PC-3 (cell line): ENCODE measurements at regions of chr19 and their contacts with region 1.

Region 1: GRCh38 chr19:43743022-43743421 is 11.7 kb downstream of the SMG9 start:
- DNase-seq: no peak
- ATAC-seq: no peak
- H3K4me3 ChIP-seq: no peak overlapping the region
- H3K27ac ChIP-seq: no peak overlapping the region
- H3K4me1 ChIP-seq: peaks cover 18% of the 10 kb centered on the region
- H3K27me3 ChIP-seq: no peaks in the 10 kb centered on the region
- CTCF ChIP-seq: no peak

Region 2: GRCh38 chr19:43765109-43765876 is 22.3 kb after region 1 on chr19:
- CTCF ChIA-PET with region 1: interaction called, 10 read pairs
- POLR2A ChIA-PET with region 1: no interaction called
- intact Hi-C with region 1: no loop called
- DNase-seq: peak; percentile 96
- ATAC-seq: peak; percentile 64
- H3K4me3 ChIP-seq: no peak overlapping the region
- H3K27ac ChIP-seq: peak overlapping the region; percentile 92
- H3K4me1 ChIP-seq: peaks cover 48% of the 10 kb centered on the region
- H3K27me3 ChIP-seq: no peaks in the 10 kb centered on the region
- CTCF ChIP-seq: no peak

Region 3: DNA sequence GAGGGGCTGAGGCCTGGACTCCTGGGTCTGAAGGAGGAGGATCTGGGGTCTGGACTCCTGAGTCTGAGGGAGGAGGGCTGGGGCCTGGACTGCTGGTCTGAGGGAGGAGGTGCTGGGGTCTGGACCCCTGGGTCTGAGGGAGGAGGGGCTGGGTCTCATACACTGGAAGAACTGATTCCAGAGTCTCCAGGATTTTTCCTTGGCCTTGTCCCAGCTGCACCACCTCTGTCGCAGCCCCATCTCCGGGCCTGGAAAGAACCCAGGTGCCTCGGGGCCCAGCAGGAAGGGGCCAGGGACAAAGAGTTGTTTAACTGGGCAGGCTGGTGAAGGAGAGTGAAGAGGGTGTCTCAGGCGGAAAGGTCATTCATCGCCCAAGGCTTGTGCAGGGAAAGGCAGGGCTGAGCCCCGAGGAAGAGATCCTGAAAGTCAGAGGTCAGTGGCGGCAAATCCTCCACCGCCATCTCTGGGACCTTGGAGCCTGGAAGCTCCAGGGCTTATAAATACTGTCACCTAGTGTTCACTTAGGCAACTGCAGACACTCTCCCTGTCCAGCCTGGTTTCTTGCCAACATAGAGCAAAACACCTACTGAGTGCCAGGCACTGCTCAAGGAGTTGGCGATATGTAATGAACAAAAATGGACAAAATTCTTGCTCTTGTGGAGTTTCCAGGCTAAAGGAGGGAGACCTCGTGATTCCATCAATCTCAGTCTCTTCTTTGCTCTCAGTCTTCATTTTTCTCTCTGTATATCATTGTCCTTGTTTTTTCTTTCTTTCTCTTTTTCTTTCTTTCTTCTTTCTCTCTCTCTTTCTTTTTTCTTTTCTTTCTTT is 42.2 kb after region 1 on chr19:
- CTCF ChIA-PET with region 1: no interaction called
- POLR2A ChIA-PET with region 1: no interaction called
- intact Hi-C with region 1: loop called (anchors 1 kb)
- DNase-seq: peak; percentile 84
- ATAC-seq: peak; percentile 39
- H3K4me3 ChIP-seq: peak overlapping the region; percentile 38; the same call in 1 of the 2 replicates
- H3K27ac ChIP-seq: peak overlapping the region; percentile 98
- H3K4me1 ChIP-seq: peaks cover 35% of the 10 kb centered on the region
- H3K27me3 ChIP-seq: no peaks in the 10 kb centered on the region
- CTCF ChIP-seq: peak; percentile 86

Region 4: GRCh38 chr19:43809762-43810696 is 67.0 kb after region 1 on chr19:
- CTCF ChIA-PET with region 1: interaction called, 7 read pairs
- POLR2A ChIA-PET with region 1: no interaction called
- intact Hi-C with region 1: loop called (anchors 2 kb)
- DNase-seq: peak; percentile 75
- ATAC-seq: peak; percentile 70
- H3K4me3 ChIP-seq: no peak overlapping the region
- H3K27ac ChIP-seq: no peak overlapping the region
- H3K4me1 ChIP-seq: no peaks in the 10 kb centered on the region; the same call in 1 of the 2 replicates
- H3K27me3 ChIP-seq: no peaks in the 10 kb centered on the region
- CTCF ChIP-seq: peak; percentile 68